ENCODE measurements at regions of chr7 and their contacts with region 1.

Region 1: GRCh38 chr7:126483972-126484371 is 768.8 kb downstream of the GRM8 start:
- DNase-seq: no peak
- ATAC-seq: no peak
- H3K4me3 ChIP-seq: no peak overlapping the region
- H3K27ac ChIP-seq: no peak overlapping the region
- H3K4me1 ChIP-seq: no peaks in the 10 kb centered on the region
- H3K27me3 ChIP-seq: no peaks in the 10 kb centered on the region
- CTCF ChIP-seq: no peak
- EP300 ChIP-seq: no peak
- POLR2A ChIP-seq: no peak
- RAD21 ChIP-seq: no peak

Region 2: DNA sequence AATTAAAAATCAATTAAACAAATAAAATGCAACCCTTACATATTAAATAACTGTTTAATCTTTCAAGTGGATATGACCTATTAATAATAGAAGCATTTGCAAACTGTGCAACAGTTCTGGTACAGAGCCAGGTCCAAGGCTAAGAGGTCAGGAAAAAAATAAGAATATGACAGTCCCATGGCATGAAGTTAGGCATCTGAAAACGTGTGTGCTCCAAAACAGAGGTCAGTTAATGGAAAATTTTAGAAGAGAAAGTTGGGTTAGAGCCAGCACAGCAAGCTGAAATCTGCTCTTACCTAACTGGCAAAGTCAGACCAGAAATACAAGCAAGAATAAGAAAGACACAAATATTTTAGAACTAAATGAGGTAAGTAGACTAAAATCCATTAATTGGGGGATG is 11.0 kb after region 1 on chr7:
- CTCF ChIA-PET with region 1: interaction called, 4 read pairs
- POLR2A ChIA-PET with region 1: no interaction called
- RAD21 ChIA-PET with region 1: no interaction called
- SMC1A ChIA-PET with region 1: interaction called, 12 read pairs
- in situ Hi-C with region 1: no loop called
- intact Hi-C with region 1: no loop called
- DNase-seq: no peak
- ATAC-seq: no peak
- H3K4me3 ChIP-seq: no peak overlapping the region
- H3K27ac ChIP-seq: no peak overlapping the region
- H3K4me1 ChIP-seq: no peaks in the 10 kb centered on the region
- H3K27me3 ChIP-seq: no peaks in the 10 kb centered on the region
- CTCF ChIP-seq: no peak
- EP300 ChIP-seq: no peak
- POLR2A ChIP-seq: no peak
- RAD21 ChIP-seq: no peak

Region 3: GRCh38 chr7:126511046-126511445 is 27.1 kb after region 1 on chr7:
- CTCF ChIA-PET with region 1: no interaction called
- POLR2A ChIA-PET with region 1: no interaction called
- RAD21 ChIA-PET with region 1: no interaction called
- SMC1A ChIA-PET with region 1: no interaction called
- in situ Hi-C with region 1: no loop called
- intact Hi-C with region 1: no loop called
- DNase-seq: no peak
- ATAC-seq: no peak
- H3K4me3 ChIP-seq: no peak overlapping the region
- H3K27ac ChIP-seq: no peak overlapping the region
- H3K4me1 ChIP-seq: no peaks in the 10 kb centered on the region
- H3K27me3 ChIP-seq: no peaks in the 10 kb centered on the region
- CTCF ChIP-seq: no peak
- EP300 ChIP-seq: no peak
- POLR2A ChIP-seq: no peak
- RAD21 ChIP-seq: no peak

Region 4: GRCh38 chr7:126720232-126720631 is 236.3 kb after region 1 on chr7:
- CTCF ChIA-PET with region 1: no interaction called
- POLR2A ChIA-PET with region 1: no interaction called
- RAD21 ChIA-PET with region 1: no interaction called
- SMC1A ChIA-PET with region 1: no interaction called
- in situ Hi-C with region 1: no loop called
- intact Hi-C with region 1: no loop called
- DNase-seq: no peak
- ATAC-seq: peak; percentile 91
- H3K4me3 ChIP-seq: no peak overlapping the region
- H3K27ac ChIP-seq: peak overlapping the region; percentile 46; the same call in 1 of the 2 replicates
- H3K4me1 ChIP-seq: peaks cover 11% of the 10 kb centered on the region
- H3K27me3 ChIP-seq: no peaks in the 10 kb centered on the region
- CTCF ChIP-seq: no peak
- EP300 ChIP-seq: peak; percentile 29 to 54; a peak in 2 of 4 replicates
- POLR2A ChIP-seq: no peak
- RAD21 ChIP-seq: no peak

Region 5: GRCh38 chr7:127189886-127190285 is 705.9 kb after region 1 on chr7:
- CTCF ChIA-PET with region 1: no interaction called
- POLR2A ChIA-PET with region 1: no interaction called
- RAD21 ChIA-PET with region 1: no interaction called
- SMC1A ChIA-PET with region 1: no interaction called
- in situ Hi-C with region 1: no loop called
- intact Hi-C with region 1: no loop called
- DNase-seq: no peak
- ATAC-seq: no peak
- H3K4me3 ChIP-seq: no peak overlapping the region
- H3K27ac ChIP-seq: no peak overlapping the region
- H3K4me1 ChIP-seq: no peaks in the 10 kb centered on the region
- H3K27me3 ChIP-seq: no peaks in the 10 kb centered on the region; a peak in 2 of 4 replicates
- CTCF ChIP-seq: no peak
- EP300 ChIP-seq: no peak
- POLR2A ChIP-seq: no peak
- RAD21 ChIP-seq: no peak

Measured in GM12878 (cell line).